Sigmoid colon (tissue), 7 donors: ENCODE measurements at regions of chr19 and their contacts with region 1.

Region 1: DNA sequence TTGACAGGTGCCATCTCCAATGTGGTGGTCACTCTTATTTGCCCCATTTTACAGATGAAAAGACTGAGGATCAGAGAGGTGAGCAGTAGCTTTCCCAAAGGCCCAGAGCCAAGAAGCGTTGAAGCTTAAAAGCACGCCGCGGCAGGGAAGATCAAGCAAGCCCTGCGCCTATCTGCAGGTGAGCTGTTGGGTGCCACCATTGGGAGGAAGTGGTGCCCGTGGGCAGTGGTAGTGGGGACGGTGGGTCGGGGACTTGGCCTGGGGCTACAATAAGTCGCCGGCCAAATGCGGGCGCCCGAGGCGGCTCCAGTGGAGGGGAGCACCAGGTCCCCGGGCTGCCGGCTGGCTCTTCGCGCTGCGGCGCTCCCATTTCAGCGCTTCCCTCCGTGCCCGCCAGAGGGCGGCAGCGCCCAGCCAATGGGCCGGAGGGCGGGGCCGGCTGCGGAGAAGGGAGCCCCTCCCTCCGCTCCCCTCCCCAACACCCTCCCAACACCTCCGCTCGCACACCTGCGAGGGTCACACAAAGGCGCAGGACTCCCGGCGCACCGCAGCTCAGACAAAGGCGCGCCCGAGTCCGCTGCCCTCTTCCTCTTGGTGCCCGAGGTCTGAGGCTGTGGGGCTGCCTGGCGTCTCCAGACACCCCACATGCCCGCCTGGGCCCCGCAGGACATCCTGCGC is 744 bp upstream of the POU2F2 start:
- DNase-seq: peak; percentile 72
- H3K4me3 ChIP-seq: peak overlapping the region in 3 of 4 donors; percentile 7 to 34 (median 26)
- H3K27ac ChIP-seq: no peak overlapping the region
- H3K4me1 ChIP-seq: peaks cover 0 to 17% (median 15%) of the 10 kb centered on the region in 4 donors
- H3K27me3 ChIP-seq: peaks cover 17 to 65% (median 26%) of the 10 kb centered on the region in 3 donors
- CTCF ChIP-seq: peak; percentile 72 to 95 (median 86)
- EP300 ChIP-seq: no peak
- POLR2A ChIP-seq: no peak

Region 2: DNA sequence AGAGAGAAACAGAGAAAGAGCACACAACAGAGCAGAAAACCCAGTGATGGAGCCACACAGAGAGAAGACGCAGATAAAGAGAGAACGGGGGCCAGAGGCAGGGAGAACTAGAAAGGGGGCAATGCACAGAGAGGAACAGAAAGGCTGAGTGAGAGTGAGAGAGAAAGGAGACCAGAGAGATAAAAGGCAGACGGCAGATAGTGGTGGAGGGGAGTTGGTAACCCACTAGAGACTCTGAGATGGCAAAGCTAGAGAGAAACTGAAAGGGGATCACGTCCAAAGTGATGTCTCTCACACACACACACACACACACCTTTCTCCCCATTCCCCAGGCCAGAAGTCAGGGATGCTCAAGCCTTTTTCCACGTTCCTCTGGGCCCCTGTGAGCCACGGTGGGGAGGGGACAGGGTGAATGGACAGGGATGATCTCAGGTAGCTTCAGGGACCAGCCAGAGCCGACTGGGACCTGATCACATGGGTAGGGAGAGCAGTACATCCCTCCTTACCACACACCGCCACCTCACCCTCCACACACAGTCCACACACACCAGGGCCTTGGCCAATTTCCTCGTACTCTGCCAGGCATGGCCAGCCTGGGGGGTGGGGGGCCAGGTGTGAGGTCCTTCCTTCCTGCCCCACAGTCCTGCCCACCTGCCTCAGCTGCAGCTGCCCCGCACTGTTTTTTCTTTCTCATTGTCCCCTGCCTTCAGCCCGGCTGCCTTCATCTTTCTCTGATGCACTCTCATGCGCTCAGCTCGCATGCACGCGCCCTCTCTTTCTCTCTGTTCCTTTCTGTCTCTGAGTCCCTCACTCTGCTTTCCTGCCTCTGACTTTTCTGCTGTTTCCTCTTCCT is 21.7 kb after region 1 on chr19:
- intact Hi-C with region 1: no loop called
- DNase-seq: no peak
- H3K4me3 ChIP-seq: no peak overlapping the region
- H3K27ac ChIP-seq: no peak overlapping the region
- H3K4me1 ChIP-seq: no peaks in the 10 kb centered on the region
- H3K27me3 ChIP-seq: peaks cover 5 to 60% (median 37%) of the 10 kb centered on the region in 3 donors
- CTCF ChIP-seq: no peak
- EP300 ChIP-seq: no peak
- POLR2A ChIP-seq: no peak

Region 3: GRCh38 chr19:42185277-42185676 is 52.3 kb after region 1 on chr19:
- intact Hi-C with region 1: loop called (anchors 1 kb)
- DNase-seq: no peak
- H3K4me3 ChIP-seq: no peak overlapping the region
- H3K27ac ChIP-seq: no peak overlapping the region
- H3K4me1 ChIP-seq: no peaks in the 10 kb centered on the region
- H3K27me3 ChIP-seq: peaks cover 5 to 38% (median 16%) of the 10 kb centered on the region in 3 donors
- CTCF ChIP-seq: no peak
- EP300 ChIP-seq: no peak
- POLR2A ChIP-seq: no peak

Region 4: GRCh38 chr19:42219812-42220750 is 87.1 kb after region 1 on chr19 and contains the start of gene ZNF526:
- intact Hi-C with region 1: no loop called
- DNase-seq: peak; percentile 99
- H3K4me3 ChIP-seq: peak within 1 kb of the TSS; percentile 75 to 85 (median 81)
- H3K27ac ChIP-seq: peak within 1 kb of the TSS; percentile 86 to 90 (median 89)
- H3K4me1 ChIP-seq: peaks cover 0 to 48% (median 46%) of the 10 kb centered on the region in 4 donors
- H3K27me3 ChIP-seq: no peaks in the 10 kb centered on the region
- CTCF ChIP-seq: no peak
- EP300 ChIP-seq: no peak
- POLR2A ChIP-seq: peak; percentile 38 to 60
- total RNA-seq, gene ZNF526: 2.2 to 6.1 (median 4.3) TPM

Region 5: DNA sequence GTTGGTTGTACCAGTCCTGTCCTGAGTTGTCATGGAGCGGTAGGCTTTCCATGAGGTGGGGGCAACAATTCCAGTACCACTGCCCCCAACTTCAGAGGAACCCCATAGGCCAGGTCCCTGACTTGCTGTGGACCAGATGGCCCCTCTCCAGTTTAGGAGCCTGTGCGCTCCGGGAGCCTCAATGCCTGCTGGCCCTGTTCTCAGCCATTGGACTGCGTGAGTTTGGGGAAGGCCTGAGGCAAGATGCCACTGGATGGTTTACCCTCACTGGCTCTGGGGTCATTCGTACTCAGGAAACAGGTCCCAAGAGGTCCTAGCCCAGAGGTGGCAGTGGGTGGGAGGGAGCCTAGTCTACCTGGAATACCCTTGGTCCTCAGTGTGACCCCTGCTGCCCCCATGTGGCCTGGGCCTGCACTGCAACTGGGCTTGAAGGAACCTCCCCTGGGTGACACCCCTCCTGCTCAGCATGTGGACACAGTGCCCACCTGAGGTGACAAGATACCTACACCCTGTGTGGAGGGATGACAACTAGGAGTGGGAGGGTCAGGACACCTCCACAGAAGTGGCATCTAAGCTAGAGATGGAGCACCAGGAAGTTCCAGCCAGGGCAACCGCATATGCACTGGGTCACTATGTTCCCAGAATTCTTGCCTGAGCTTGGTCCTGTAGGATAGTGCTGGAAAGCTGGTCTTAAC is 163.0 kb after region 1 on chr19:
- intact Hi-C with region 1: loop called (anchors 10 kb)
- DNase-seq: peak; percentile 89
- H3K4me3 ChIP-seq: no peak overlapping the region
- H3K27ac ChIP-seq: no peak overlapping the region
- H3K4me1 ChIP-seq: peaks cover 0 to 3% (median 0%) of the 10 kb centered on the region in 4 donors
- H3K27me3 ChIP-seq: no peaks in the 10 kb centered on the region
- CTCF ChIP-seq: peak; percentile 91 to 97 (median 94)
- EP300 ChIP-seq: no peak
- POLR2A ChIP-seq: no peak

Region 6: GRCh38 chr19:42325273-42325895 is 192.4 kb after region 1 on chr19 and contains the start of gene MEGF8:
- intact Hi-C with region 1: loop called (anchors 5 kb)
- DNase-seq: peak; percentile 99
- H3K4me3 ChIP-seq: peak within 1 kb of the TSS; percentile 66 to 94 (median 80)
- H3K27ac ChIP-seq: peak within 1 kb of the TSS; percentile 73 to 80 (median 76)
- H3K4me1 ChIP-seq: peaks cover 0 to 40% (median 37%) of the 10 kb centered on the region in 4 donors
- H3K27me3 ChIP-seq: peaks cover 17 to 29% (median 18%) of the 10 kb centered on the region in 3 donors
- CTCF ChIP-seq: peak in 3 of 4 experiments; percentile 76 to 86 (median 81)
- EP300 ChIP-seq: no peak
- POLR2A ChIP-seq: peak; percentile 52 to 55
- total RNA-seq, gene MEGF8: 5.4 to 21.6 (median 9.3) TPM